Mammary epithelial cell (primary cell): ENCODE measurements at regions of chr1 and their contacts with region 1.

Region 1: GRCh38 chr1:220527908-220528678 is at the start of gene MARK1:
- DNase-seq: peak; percentile 56
- H3K4me3 ChIP-seq: peak within 1 kb of the TSS; percentile 90 to 95 (median 95)
- H3K27ac ChIP-seq: peak within 1 kb of the TSS; percentile 75
- H3K4me1 ChIP-seq: peaks cover 13% of the 10 kb centered on the region
- H3K27me3 ChIP-seq: no peaks in the 10 kb centered on the region
- CTCF ChIP-seq: no peak
- total RNA-seq, gene MARK1: 9.3 to 14.7 TPM

Region 2: DNA sequence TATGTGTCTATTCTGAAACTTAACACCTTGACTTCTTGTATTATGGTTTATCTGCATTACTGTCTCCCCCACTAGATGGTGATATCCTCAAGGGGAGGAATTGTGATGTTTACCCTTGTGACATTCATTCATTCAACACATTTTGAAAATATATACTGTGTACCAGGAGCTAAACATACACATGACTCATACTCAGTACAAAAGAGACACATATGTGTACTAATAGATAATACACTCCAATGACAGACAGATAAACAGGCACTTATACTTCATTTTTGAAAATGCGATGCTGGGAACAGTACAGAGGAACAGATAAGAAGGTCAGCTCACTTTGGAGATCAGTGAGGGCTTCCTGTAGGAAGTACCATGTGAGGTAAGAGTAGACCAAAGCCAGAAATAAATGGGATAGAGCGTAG is 246.9 kb before region 1 on chr1:
- CTCF ChIA-PET with region 1: no interaction called
- dilution Hi-C with region 1: no loop called
- in situ Hi-C with region 1: loop called in 1 of 2 experiments (anchors 25 kb)
- intact Hi-C with region 1: no loop called
- DNase-seq: peak; percentile 32
- H3K4me3 ChIP-seq: no peak overlapping the region
- H3K27ac ChIP-seq: no peak overlapping the region
- H3K4me1 ChIP-seq: no peaks in the 10 kb centered on the region
- H3K27me3 ChIP-seq: no peaks in the 10 kb centered on the region
- CTCF ChIP-seq: peak; percentile 62 to 63

Region 3: GRCh38 chr1:220315070-220315839 is 212.8 kb before region 1 on chr1:
- CTCF ChIA-PET with region 1: no interaction called
- dilution Hi-C with region 1: no loop called
- in situ Hi-C with region 1: no loop called
- intact Hi-C with region 1: no loop called
- DNase-seq: peak; percentile 43
- H3K4me3 ChIP-seq: no peak overlapping the region
- H3K27ac ChIP-seq: no peak overlapping the region
- H3K4me1 ChIP-seq: no peaks in the 10 kb centered on the region
- H3K27me3 ChIP-seq: peaks cover 2% of the 10 kb centered on the region
- CTCF ChIP-seq: no peak

Region 4: GRCh38 chr1:220335668-220336067 is 192.4 kb before region 1 on chr1:
- CTCF ChIA-PET with region 1: no interaction called
- dilution Hi-C with region 1: no loop called
- in situ Hi-C with region 1: no loop called
- intact Hi-C with region 1: loop called (anchors 2 kb)
- DNase-seq: peak; percentile 39
- H3K4me3 ChIP-seq: no peak overlapping the region
- H3K27ac ChIP-seq: peak overlapping the region; percentile 53
- H3K4me1 ChIP-seq: peaks cover 26% of the 10 kb centered on the region
- H3K27me3 ChIP-seq: no peaks in the 10 kb centered on the region
- CTCF ChIP-seq: no peak

Region 5: DNA sequence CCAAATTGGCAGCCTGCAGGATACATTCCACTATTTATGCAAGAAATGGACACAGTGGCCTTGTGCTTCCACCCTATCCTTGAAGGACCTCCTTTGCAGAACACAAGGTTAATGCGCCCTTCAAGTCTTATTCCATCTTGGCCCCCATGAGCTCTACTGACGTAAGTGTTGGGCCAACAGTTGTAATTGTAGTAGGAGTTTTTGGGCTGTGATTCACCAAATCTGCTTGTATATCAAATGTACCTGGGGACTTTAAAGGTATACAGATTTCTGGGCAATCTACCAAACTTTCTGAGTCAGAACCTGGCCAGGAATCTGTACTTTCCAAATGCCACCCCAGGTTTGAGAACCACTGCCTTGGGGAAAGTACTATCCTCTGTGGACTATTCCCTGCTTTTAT is 101.1 kb before region 1 on chr1:
- CTCF ChIA-PET with region 1: no interaction called
- dilution Hi-C with region 1: no loop called
- in situ Hi-C with region 1: no loop called
- intact Hi-C with region 1: loop called (anchors 5 kb)
- DNase-seq: peak; percentile 91
- H3K4me3 ChIP-seq: no peak overlapping the region
- H3K27ac ChIP-seq: no peak overlapping the region
- H3K4me1 ChIP-seq: peaks cover 8% of the 10 kb centered on the region
- H3K27me3 ChIP-seq: no peaks in the 10 kb centered on the region
- CTCF ChIP-seq: no peak

Region 6: DNA sequence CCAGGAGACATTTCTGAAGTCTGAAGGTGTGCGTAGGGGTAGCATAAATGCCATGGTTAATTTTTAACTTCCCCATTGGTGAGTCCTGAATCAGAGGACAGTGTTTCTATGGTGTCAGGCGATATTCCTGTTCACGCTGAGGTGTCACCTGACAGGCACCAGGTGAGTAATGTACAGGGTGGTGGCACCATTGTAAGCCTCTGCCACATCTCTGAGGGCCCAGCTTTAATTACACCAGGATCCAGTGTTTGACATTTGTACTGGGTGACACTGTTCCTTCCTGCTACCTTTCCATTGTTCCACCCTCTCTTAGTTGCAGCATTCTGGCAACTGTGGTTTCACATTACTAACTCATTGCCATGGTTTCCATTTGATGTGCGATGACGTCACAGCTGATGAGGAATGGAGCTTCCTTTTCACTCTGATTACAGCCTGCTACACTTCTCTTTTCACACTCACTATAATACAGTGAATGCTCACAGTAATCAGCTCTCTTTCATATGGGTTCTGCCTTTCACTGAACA is 40.7 kb before region 1 on chr1:
- CTCF ChIA-PET with region 1: no interaction called
- dilution Hi-C with region 1: no loop called
- in situ Hi-C with region 1: no loop called
- intact Hi-C with region 1: loop called (anchors 5 kb)
- DNase-seq: peak; percentile 90
- H3K4me3 ChIP-seq: no peak overlapping the region
- H3K27ac ChIP-seq: no peak overlapping the region
- H3K4me1 ChIP-seq: no peaks in the 10 kb centered on the region
- H3K27me3 ChIP-seq: no peaks in the 10 kb centered on the region
- CTCF ChIP-seq: no peak

Region 7: DNA sequence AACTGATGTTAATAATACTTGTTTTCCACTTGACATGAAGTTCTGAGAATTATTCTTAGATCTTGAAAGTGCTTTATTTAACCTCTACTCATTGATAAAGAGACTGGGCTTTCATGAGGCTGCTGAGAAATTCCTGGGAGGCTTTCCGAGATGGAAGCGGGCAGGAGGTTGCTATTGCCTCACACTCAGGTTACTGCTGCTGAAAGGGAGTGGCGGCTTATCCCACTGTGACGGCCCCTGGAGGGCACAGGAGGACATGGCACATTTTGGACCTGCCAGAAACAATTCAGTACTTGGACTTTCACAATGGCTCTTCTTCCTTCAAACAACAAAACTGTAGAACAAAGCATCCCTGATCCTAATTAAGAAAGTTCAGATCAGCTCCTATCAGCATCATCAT is 16.3 kb before region 1 on chr1:
- CTCF ChIA-PET with region 1: interaction called, 3 read pairs
- dilution Hi-C with region 1: no loop called
- in situ Hi-C with region 1: no loop called
- intact Hi-C with region 1: loop called (anchors 1 kb)
- DNase-seq: no peak
- H3K4me3 ChIP-seq: no peak overlapping the region
- H3K27ac ChIP-seq: peak overlapping the region; percentile 9
- H3K4me1 ChIP-seq: peaks cover 46% of the 10 kb centered on the region
- H3K27me3 ChIP-seq: no peaks in the 10 kb centered on the region
- CTCF ChIP-seq: peak; percentile 38 to 40

Region 8: GRCh38 chr1:220604934-220605333 is 76.8 kb after region 1 on chr1:
- CTCF ChIA-PET with region 1: no interaction called
- dilution Hi-C with region 1: no loop called
- in situ Hi-C with region 1: no loop called
- intact Hi-C with region 1: no loop called
- DNase-seq: no peak
- H3K4me3 ChIP-seq: no peak overlapping the region
- H3K27ac ChIP-seq: no peak overlapping the region
- H3K4me1 ChIP-seq: no peaks in the 10 kb centered on the region
- H3K27me3 ChIP-seq: no peaks in the 10 kb centered on the region
- CTCF ChIP-seq: no peak